K562 (cell line): ENCODE measurements at regions of chr6 and their contacts with region 1.

Region 1: DNA sequence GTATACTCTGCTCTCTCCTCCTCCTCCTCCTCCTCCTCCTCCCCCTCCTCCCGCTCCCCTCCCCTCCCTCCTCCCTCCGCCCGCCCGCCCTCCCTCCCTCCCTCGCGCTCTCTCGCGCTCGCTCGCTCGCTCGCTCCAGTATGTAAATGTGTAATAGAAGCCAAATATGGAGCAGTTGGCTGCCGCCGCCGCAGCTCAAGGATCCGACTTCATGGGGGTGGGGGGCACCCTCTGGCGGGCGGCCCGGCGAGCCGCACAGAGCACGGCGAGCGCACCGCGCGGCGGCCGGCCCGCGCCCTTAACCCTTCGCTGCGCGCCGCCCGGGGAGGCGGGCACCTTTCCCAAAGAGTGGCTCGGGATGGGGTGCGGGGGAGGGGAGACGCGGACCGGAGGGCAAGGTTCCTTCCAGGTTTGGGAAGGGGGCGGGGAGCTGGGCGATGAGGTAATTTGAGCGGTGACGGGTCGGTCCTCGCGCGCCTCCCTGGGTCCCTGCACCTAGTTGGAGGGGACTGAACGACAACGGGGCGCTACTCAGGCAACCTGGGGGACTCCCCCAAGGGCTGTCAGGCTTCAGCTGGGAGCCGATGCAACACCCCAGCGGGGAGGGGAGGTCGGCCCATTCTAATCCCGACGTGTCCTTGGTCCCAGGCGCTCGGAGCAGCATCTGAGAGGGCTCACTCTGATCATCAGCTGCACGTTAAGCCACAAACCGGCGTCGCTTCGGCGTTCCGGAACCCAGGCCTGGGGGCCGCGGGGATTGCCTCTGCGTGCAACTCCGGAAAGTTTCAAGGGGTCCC is 409 bp upstream of the ATXN1 start:
- DNase-seq: peak; percentile 64 to 82 (median 70)
- ATAC-seq: peak; percentile 81
- H3K4me3 ChIP-seq: peak overlapping the region; percentile 43
- H3K27ac ChIP-seq: peak overlapping the region; percentile 25; the same call in 1 of the 3 replicates
- H3K4me1 ChIP-seq: peaks cover 3 to 27% of the 10 kb centered on the region in 2 experiments; a peak in 3 of 5 replicates
- H3K27me3 ChIP-seq: peaks cover 13 to 17% of the 10 kb centered on the region in 2 experiments; a peak in 4 of 5 replicates
- CTCF ChIP-seq: peak in 2 of 3 experiments; percentile 33 to 71; a peak in 4 of 6 replicates
- EP300 ChIP-seq: no peak
- POLR2A ChIP-seq: no peak
- RAD21 ChIP-seq: peak; percentile 22 to 50; a peak in 3 of 4 replicates

Region 2: GRCh38 chr6:16409531-16410441 is 351.9 kb before region 1 on chr6:
- CTCF ChIA-PET with region 1: no interaction called
- POLR2A ChIA-PET with region 1: no interaction called
- in situ Hi-C with region 1: no loop called
- intact Hi-C with region 1: loop called (anchors 10 kb)
- DNase-seq: peak; percentile 53 to 77 (median 64)
- ATAC-seq: peak; percentile 96
- H3K4me3 ChIP-seq: no peak overlapping the region
- H3K27ac ChIP-seq: no peak overlapping the region
- H3K4me1 ChIP-seq: no peaks in the 10 kb centered on the region; a peak in 1 of 5 replicates
- H3K27me3 ChIP-seq: peaks cover 24 to 36% of the 10 kb centered on the region in 2 experiments; a peak in 4 of 5 replicates
- CTCF ChIP-seq: peak; percentile 86 to 93 (median 90)
- EP300 ChIP-seq: no peak
- POLR2A ChIP-seq: no peak
- RAD21 ChIP-seq: peak; percentile 80 to 87

Region 3: GRCh38 chr6:16514249-16514648 is 247.4 kb before region 1 on chr6:
- CTCF ChIA-PET with region 1: interaction called, 3 read pairs
- POLR2A ChIA-PET with region 1: no interaction called
- in situ Hi-C with region 1: no loop called
- intact Hi-C with region 1: loop called (anchors 5 kb)
- DNase-seq: peak; percentile 26 to 31 (median 26)
- ATAC-seq: peak; percentile 78
- H3K4me3 ChIP-seq: no peak overlapping the region
- H3K27ac ChIP-seq: no peak overlapping the region
- H3K4me1 ChIP-seq: no peaks in the 10 kb centered on the region
- H3K27me3 ChIP-seq: peaks cover 11 to 16% of the 10 kb centered on the region in 2 experiments; a peak in 4 of 5 replicates
- CTCF ChIP-seq: peak; percentile 41 to 54 (median 44)
- EP300 ChIP-seq: no peak
- POLR2A ChIP-seq: no peak
- RAD21 ChIP-seq: peak; percentile 25 to 52; a peak in 3 of 4 replicates

Region 4: DNA sequence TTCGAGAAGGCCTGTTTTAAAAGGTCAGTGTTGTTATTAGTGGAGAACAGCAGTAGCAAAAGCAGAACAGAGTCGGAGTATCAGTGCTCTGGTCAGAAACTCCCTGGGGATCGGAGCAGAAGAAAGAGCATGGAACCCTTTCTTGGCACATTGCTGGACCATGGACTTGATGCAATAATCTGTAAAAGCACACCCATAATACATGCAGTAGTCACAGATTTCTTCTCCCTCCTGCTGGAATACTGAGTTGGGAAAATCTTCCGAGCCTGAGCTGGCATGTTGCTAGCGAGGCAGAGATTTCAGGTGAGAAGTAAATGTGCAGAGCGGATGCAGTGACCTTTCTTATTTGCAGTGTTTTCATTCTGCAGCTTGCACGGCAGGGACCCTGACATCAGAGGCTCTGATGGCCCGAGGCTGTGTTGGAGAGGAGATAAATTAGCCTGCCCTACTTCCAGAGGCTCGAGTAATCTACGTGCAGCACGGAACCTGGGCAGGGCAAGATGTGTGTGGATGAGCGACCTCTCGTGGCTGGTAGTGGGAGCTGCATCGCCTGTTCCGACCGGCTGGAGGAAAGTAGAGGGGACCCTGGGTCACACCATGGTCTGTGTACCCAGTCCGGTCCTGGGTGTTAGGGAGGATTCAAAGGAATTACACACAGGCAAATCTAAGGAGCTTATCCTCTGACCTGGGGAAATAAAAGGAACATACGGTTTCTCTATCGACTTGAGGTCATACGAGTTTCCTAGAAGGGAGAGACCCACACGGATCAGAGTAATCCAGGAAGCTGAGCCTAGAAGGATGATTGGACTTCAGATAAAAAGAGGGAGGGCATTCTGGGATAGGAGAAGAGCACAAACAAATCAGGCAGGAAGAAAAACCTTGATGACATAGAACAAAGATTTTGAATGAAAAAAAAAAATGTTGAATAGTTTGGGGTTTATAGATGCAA is 203.2 kb after region 1 on chr6:
- CTCF ChIA-PET with region 1: interaction called, 6 read pairs
- POLR2A ChIA-PET with region 1: no interaction called
- in situ Hi-C with region 1: no loop called
- intact Hi-C with region 1: loop called (anchors 10 kb)
- DNase-seq: peak; percentile 74 to 79 (median 76)
- ATAC-seq: peak; percentile 100
- H3K4me3 ChIP-seq: no peak overlapping the region
- H3K27ac ChIP-seq: no peak overlapping the region
- H3K4me1 ChIP-seq: no peaks in the 10 kb centered on the region
- H3K27me3 ChIP-seq: peaks cover 0 to 9% of the 10 kb centered on the region in 2 experiments; a peak in 1 of 5 replicates
- CTCF ChIP-seq: peak; percentile 87 to 96 (median 93)
- EP300 ChIP-seq: no peak
- POLR2A ChIP-seq: no peak
- RAD21 ChIP-seq: peak; percentile 85 to 88